BJ (cell line): ENCODE measurements at regions of chr5 and their contacts with region 1.

Region 1: GRCh38 chr5:35926389-35927051 is 11.9 kb downstream of the CAPSL start:
- DNase-seq: no peak
- H3K4me3 ChIP-seq: no peak overlapping the region
- H3K27me3 ChIP-seq: no peaks in the 10 kb centered on the region
- CTCF ChIP-seq: peak; percentile 73

Region 2: GRCh38 chr5:35089334-35090314 is 836.9 kb before region 1 on chr5:
- CTCF ChIA-PET with region 1: interaction called, 17 read pairs
- POLR2A ChIA-PET with region 1: no interaction called
- DNase-seq: peak; percentile 33
- H3K4me3 ChIP-seq: no peak overlapping the region
- H3K27me3 ChIP-seq: no peaks in the 10 kb centered on the region
- CTCF ChIP-seq: peak; percentile 87

Region 3: DNA sequence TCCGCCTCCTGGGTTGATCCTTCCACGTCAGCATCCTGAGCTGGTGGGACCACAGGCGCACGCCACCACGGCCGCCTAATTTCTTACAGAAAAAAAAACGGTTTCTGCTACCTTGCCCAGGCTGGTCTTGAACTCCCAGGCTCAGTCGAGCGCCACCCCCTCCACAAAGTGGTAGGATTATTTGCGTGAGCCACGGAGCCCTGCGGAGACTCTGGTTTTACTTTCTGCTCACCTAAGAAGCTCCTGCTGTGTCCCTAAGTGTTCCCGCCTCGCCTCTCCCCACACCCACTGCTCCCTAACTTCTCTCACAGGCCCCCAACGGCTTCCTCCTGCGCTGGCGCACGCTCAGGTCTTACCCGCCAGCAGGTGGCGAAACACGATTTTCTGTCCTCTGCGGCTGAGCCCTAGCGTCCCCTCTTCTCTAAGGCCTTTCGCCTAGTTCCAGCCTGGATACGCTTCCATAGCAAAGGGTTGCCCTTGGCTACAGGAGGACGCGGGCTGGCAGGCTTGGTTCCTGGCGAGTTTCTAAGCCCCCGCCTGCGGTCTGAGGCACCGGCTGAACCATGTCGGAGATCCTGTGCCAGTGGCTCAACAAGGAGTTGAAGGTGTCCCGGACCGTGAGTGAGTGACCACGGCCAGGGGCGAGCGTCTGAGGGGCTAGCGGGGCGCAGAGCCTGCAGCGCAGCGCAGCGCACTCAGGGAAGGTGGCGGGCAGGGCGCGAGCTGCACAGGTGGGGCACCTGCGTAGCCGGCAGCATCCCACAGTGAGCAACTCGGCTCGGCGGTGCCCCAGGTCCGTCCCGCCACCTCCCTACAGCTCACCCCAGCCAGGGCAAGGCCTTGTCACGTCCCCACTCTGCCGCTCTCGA is 308.9 kb before region 1 on chr5 and contains the start of gene SPEF2:
- CTCF ChIA-PET with region 1: interaction called, 31 read pairs
- POLR2A ChIA-PET with region 1: no interaction called
- DNase-seq: peak; percentile 59
- H3K4me3 ChIP-seq: peak within 1 kb of the TSS; percentile 87
- H3K27me3 ChIP-seq: no peaks in the 10 kb centered on the region
- CTCF ChIP-seq: peak; percentile 91
- polyA plus RNA-seq, gene SPEF2: 4.0 and 5.8 TPM in 2 replicates

Region 4: DNA sequence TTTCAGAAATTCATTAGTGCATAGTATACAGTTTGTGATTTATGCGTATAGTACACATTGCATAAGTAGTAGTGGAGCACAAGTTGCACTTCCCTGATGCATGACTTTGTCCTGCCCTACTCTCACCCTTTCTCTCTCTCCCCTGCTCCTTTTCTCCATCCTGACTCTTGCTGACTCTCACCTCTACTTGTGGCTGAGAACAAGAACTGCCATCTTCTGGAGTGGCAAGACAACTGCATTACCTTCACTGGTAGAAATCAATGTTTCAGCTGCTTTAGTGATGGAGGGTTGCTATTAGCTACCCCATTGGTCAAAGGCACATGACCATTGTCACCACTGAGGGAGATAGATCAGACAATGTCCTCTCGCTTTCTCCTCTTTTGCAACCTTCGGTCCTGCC is 282.0 kb before region 1 on chr5:
- CTCF ChIA-PET with region 1: interaction called, 119 read pairs
- POLR2A ChIA-PET with region 1: no interaction called
- DNase-seq: no peak
- H3K4me3 ChIP-seq: no peak overlapping the region
- H3K27me3 ChIP-seq: no peaks in the 10 kb centered on the region
- CTCF ChIP-seq: no peak

Region 5: GRCh38 chr5:35777358-35778087 is 149.0 kb before region 1 on chr5:
- CTCF ChIA-PET with region 1: interaction called, 42 read pairs
- POLR2A ChIA-PET with region 1: no interaction called
- DNase-seq: no peak
- H3K4me3 ChIP-seq: no peak overlapping the region
- H3K27me3 ChIP-seq: no peaks in the 10 kb centered on the region
- CTCF ChIP-seq: peak; percentile 64

Region 6: DNA sequence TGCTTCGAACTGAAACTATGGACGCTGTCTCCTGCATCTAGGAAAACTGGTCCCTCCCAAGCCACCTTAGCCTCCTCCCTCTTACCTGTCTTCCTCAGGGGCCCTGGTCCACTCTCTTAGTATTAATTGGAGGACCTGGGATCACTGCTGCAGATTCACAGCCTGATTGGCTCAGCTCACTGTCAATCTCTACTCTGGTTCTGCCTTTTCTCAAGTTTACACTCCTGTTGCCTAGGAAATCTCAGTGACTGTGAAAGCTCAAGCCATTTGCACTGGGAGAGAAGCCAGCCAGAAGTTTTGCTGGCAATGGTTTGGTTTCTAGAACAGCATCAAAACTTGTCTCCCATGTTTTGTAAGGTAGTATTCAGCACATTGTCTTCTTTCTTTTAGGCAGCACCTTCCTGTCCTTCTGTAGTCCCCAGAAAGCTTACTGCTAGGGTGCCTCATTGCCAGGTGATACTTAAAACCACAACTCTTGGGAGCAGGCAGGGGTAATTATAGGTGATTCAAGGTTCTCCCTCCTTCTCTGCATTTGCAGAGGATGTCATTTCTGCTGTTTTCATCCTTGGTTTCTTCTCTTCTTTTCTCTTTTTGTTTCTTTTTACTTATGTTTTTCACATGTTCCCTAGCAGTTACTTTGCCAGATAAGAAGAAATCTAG is 12.2 kb after region 1 on chr5 and contains the start of gene CAPSL:
- CTCF ChIA-PET with region 1: interaction called, 15 read pairs
- POLR2A ChIA-PET with region 1: no interaction called
- DNase-seq: no peak
- H3K4me3 ChIP-seq: no peak within 1 kb of the TSS
- H3K27me3 ChIP-seq: peaks cover 4% of the 10 kb centered on the region; the same call in 1 of the 2 replicates
- CTCF ChIP-seq: no peak
- polyA plus RNA-seq, gene CAPSL: 0.18 and 0.27 TPM in 2 replicates